ENCODE measurements at regions of chr7 and their contacts with region 1.

Region 1: GRCh38 chr7:124152859-124153692 is 120.2 kb upstream of the TMEM229A start:
- DNase-seq: peak in 1 of 4 donors; percentile 12
- ATAC-seq: peak; percentile 60
- H3K4me3 ChIP-seq: no peak overlapping the region
- H3K27ac ChIP-seq: no peak overlapping the region
- H3K4me1 ChIP-seq: no peaks in the 10 kb centered on the region
- H3K27me3 ChIP-seq: no peaks in the 10 kb centered on the region
- CTCF ChIP-seq: no peak

Region 2: DNA sequence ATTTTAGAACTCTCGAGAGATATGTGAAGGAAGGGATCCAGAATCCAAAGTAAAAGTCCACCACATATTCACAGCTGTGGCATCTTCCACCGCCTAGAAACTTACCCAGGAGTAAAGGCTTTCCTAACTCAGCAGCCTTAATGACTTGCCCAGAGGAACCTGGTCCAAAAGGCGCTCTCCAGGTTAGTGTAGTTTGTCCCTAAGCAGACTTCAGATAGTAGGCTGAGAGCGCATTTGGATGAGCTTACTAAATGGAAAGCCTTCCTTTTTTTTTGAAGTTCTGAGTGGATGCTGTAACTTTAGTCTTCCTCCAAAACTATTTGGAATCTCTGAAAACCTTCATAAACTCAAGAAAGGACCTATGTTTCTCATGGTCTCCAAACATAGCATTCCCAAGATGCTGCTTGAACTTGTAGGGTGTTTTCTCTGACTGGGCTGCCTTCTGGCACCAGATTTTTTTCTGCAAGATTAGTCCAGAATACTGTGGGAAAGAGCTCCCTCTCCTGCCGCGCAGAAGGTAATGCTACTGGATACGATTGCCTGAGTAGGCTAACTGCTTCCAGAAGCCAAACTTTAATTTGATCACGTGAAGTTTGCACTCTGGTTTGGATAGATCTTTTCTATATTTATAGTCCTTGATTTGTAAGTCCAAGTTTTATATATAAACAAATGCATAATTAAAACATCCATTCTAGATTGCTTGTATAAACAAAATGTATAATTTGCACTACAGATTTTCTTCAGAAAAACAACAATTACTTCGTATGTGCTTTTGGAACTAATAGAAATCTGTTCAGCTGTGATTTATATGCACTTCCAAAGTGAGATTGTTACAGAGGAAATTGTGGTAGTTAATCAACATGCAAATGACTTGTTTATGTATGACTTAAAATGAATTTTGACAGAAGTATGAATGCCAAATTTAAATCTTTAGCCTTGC is 632.1 kb after region 1 on chr7:
- intact Hi-C with region 1: loop called in 1 of 2 experiments (anchors 10 kb)
- DNase-seq: peak in 2 of 4 donors; percentile 69 to 85
- ATAC-seq: peak; percentile 93
- H3K4me3 ChIP-seq: no peak overlapping the region
- H3K27ac ChIP-seq: no peak overlapping the region
- H3K4me1 ChIP-seq: no peaks in the 10 kb centered on the region
- H3K27me3 ChIP-seq: no peaks in the 10 kb centered on the region
- CTCF ChIP-seq: peak; percentile 63 to 71